CD4-positive, alpha-beta T cell (primary cell): ENCODE measurements at regions of chr12 and their contacts with region 1.

Region 1: GRCh38 chr12:53599579-53599978 is 26.6 kb downstream of the ATF7 start:
- DNase-seq: no peak
- ATAC-seq: no peak
- H3K4me3 ChIP-seq: no peak overlapping the region
- H3K4me3 Mint-ChIP-seq: no peak overlapping the region
- H3K27ac ChIP-seq: no peak overlapping the region
- H3K27ac Mint-ChIP-seq: no peak overlapping the region
- H3K4me1 ChIP-seq: no peaks in the 10 kb centered on the region
- H3K4me1 Mint-ChIP-seq: peaks cover 39% of the 10 kb centered on the region
- H3K27me3 ChIP-seq: no peaks in the 10 kb centered on the region
- H3K27me3 Mint-ChIP-seq: no peaks in the 10 kb centered on the region
- CTCF ChIP-seq: no peak

Region 2: DNA sequence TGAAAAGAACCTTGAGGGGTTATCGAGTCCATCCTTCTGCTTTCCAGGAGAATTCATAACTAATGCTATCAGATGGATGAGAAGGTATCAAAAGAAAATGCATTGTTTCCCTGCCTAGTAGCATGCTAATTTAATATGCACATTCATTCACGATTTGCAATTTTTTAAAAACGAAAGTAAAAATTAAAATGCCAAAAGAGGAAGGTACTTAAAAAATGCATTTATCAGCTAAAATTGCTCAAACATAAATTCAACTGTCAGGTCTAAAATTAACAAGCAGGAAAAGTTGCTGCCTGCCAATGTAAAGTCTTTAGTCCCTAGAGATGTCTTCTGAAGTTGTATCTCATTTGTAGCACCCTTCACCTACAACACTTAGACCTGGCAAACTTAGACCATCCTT is 18.7 kb after region 1 on chr12:
- CTCF ChIA-PET with region 1: interaction called, 3 read pairs
- POLR2A ChIA-PET with region 1: interaction called, 3 read pairs
- intact Hi-C with region 1: loop called in 1 of 2 experiments (anchors 2 kb)
- DNase-seq: peak in 1 of 14 experiments; percentile 30
- ATAC-seq: no peak
- H3K4me3 ChIP-seq: peak overlapping the region; percentile 40
- H3K4me3 Mint-ChIP-seq: peak overlapping the region; percentile 79
- H3K27ac ChIP-seq: no peak overlapping the region
- H3K27ac Mint-ChIP-seq: peak overlapping the region; percentile 72
- H3K4me1 ChIP-seq: peaks cover 20% of the 10 kb centered on the region
- H3K4me1 Mint-ChIP-seq: peaks cover 37% of the 10 kb centered on the region
- H3K27me3 ChIP-seq: no peaks in the 10 kb centered on the region
- H3K27me3 Mint-ChIP-seq: no peaks in the 10 kb centered on the region
- CTCF ChIP-seq: no peak